ENCODE measurements at regions of chr1 and their contacts with region 1.

Region 1: GRCh38 chr1:44213222-44214112 is at the start of gene DMAP1:
- DNase-seq: peak; percentile 92
- ATAC-seq: peak; percentile 81
- H3K4me3 ChIP-seq: peak within 1 kb of the TSS; percentile 77 to 95 (median 84)
- H3K4me3 Mint-ChIP-seq: peak within 1 kb of the TSS; percentile 97
- H3K27ac ChIP-seq: peak within 1 kb of the TSS; percentile 45 to 53
- H3K27ac Mint-ChIP-seq: peak within 1 kb of the TSS; percentile 93
- H3K4me1 ChIP-seq: peaks cover 16 to 17% of the 10 kb centered on the region in 2 donors
- H3K4me1 Mint-ChIP-seq: peaks cover 32% of the 10 kb centered on the region
- H3K27me3 ChIP-seq: no peaks in the 10 kb centered on the region
- H3K27me3 Mint-ChIP-seq: no peaks in the 10 kb centered on the region
- CTCF ChIP-seq: no peak
- total RNA-seq, gene DMAP1: 88.5 and 95.5 TPM in 2 replicates

Region 2: GRCh38 chr1:42979896-42980800 is 1233.3 kb before region 1 on chr1:
- CTCF ChIA-PET with region 1: no interaction called
- POLR2A ChIA-PET with region 1: interaction called, 12 read pairs
- intact Hi-C with region 1: no loop called
- DNase-seq: peak; percentile 61
- ATAC-seq: no peak
- H3K4me3 ChIP-seq: no peak overlapping the region
- H3K4me3 Mint-ChIP-seq: no peak overlapping the region
- H3K27ac ChIP-seq: no peak overlapping the region
- H3K27ac Mint-ChIP-seq: peak overlapping the region; percentile 69
- H3K4me1 ChIP-seq: peaks cover 10 to 11% of the 10 kb centered on the region in 2 donors
- H3K4me1 Mint-ChIP-seq: peaks cover 19% of the 10 kb centered on the region
- H3K27me3 ChIP-seq: peaks cover 0 to 2% (median 0%) of the 10 kb centered on the region in 4 experiments
- H3K27me3 Mint-ChIP-seq: no peaks in the 10 kb centered on the region
- CTCF ChIP-seq: no peak

Region 3: DNA sequence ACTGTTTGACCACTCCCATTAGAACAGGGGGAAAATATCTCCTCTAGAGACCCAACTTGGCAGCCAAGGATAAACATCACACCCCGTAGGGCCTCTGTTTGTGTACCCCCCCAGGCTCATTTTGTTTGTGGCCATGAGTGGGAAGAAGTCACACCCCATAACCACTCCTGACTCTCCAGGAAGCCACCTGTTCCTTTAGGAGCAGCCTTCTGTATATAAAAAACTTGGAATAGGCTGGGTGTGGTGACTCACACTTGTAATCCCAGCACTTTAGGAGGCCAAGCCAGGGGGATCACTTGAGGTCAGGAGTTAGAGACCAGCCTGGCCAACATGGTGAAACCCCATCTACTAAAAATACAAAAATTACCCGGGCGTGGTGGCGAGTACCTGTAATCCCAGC is 153.5 kb before region 1 on chr1:
- CTCF ChIA-PET with region 1: no interaction called
- POLR2A ChIA-PET with region 1: no interaction called
- intact Hi-C with region 1: no loop called
- DNase-seq: no peak
- ATAC-seq: no peak
- H3K4me3 ChIP-seq: no peak overlapping the region
- H3K4me3 Mint-ChIP-seq: no peak overlapping the region
- H3K27ac ChIP-seq: no peak overlapping the region
- H3K27ac Mint-ChIP-seq: no peak overlapping the region
- H3K4me1 ChIP-seq: no peaks in the 10 kb centered on the region
- H3K4me1 Mint-ChIP-seq: no peaks in the 10 kb centered on the region
- H3K27me3 ChIP-seq: no peaks in the 10 kb centered on the region
- H3K27me3 Mint-ChIP-seq: peaks cover 5% of the 10 kb centered on the region
- CTCF ChIP-seq: no peak

Region 4: GRCh38 chr1:44236490-44237272 is 23.2 kb after region 1 on chr1:
- CTCF ChIA-PET with region 1: interaction called, 17 read pairs
- POLR2A ChIA-PET with region 1: no interaction called
- intact Hi-C with region 1: no loop called
- DNase-seq: no peak
- ATAC-seq: no peak
- H3K4me3 ChIP-seq: no peak overlapping the region
- H3K4me3 Mint-ChIP-seq: no peak overlapping the region
- H3K27ac ChIP-seq: no peak overlapping the region
- H3K27ac Mint-ChIP-seq: no peak overlapping the region
- H3K4me1 ChIP-seq: peaks cover 4 to 7% of the 10 kb centered on the region in 2 donors
- H3K4me1 Mint-ChIP-seq: peaks cover 10% of the 10 kb centered on the region
- H3K27me3 ChIP-seq: no peaks in the 10 kb centered on the region
- H3K27me3 Mint-ChIP-seq: no peaks in the 10 kb centered on the region
- CTCF ChIP-seq: no peak

Region 5: GRCh38 chr1:44318097-44319088 is 104.9 kb after region 1 on chr1:
- CTCF ChIA-PET with region 1: interaction called, 6 read pairs
- POLR2A ChIA-PET with region 1: no interaction called
- intact Hi-C with region 1: loop called (anchors 1 kb)
- DNase-seq: peak; percentile 76
- ATAC-seq: no peak
- H3K4me3 ChIP-seq: no peak overlapping the region
- H3K4me3 Mint-ChIP-seq: no peak overlapping the region
- H3K27ac ChIP-seq: no peak overlapping the region
- H3K27ac Mint-ChIP-seq: peak overlapping the region; percentile 67
- H3K4me1 ChIP-seq: peaks cover 3 to 9% of the 10 kb centered on the region in 2 donors
- H3K4me1 Mint-ChIP-seq: peaks cover 9% of the 10 kb centered on the region
- H3K27me3 ChIP-seq: no peaks in the 10 kb centered on the region
- H3K27me3 Mint-ChIP-seq: no peaks in the 10 kb centered on the region
- CTCF ChIP-seq: peak; percentile 92

Region 6: GRCh38 chr1:44594871-44595746 is 381.6 kb after region 1 on chr1:
- CTCF ChIA-PET with region 1: interaction called, 12 read pairs
- POLR2A ChIA-PET with region 1: no interaction called
- intact Hi-C with region 1: no loop called
- DNase-seq: peak; percentile 80
- ATAC-seq: peak; percentile 91
- H3K4me3 ChIP-seq: no peak overlapping the region
- H3K4me3 Mint-ChIP-seq: no peak overlapping the region
- H3K27ac ChIP-seq: no peak overlapping the region
- H3K27ac Mint-ChIP-seq: peak overlapping the region; percentile 16
- H3K4me1 ChIP-seq: peaks cover 0 to 3% of the 10 kb centered on the region in 2 donors
- H3K4me1 Mint-ChIP-seq: no peaks in the 10 kb centered on the region
- H3K27me3 ChIP-seq: no peaks in the 10 kb centered on the region
- H3K27me3 Mint-ChIP-seq: peaks cover 7% of the 10 kb centered on the region
- CTCF ChIP-seq: peak; percentile 99

Measured in B cell (primary cell).